ENCODE measurements at regions of chr19 and their contacts with region 1.

Region 1: GRCh38 chr19:46076951-46077816 is 36.4 kb upstream of the IGFL4 start:
- DNase-seq: peak; percentile 89
- H3K4me3 Mint-ChIP-seq: peak overlapping the region; percentile 69
- H3K27ac Mint-ChIP-seq: no peak overlapping the region
- H3K4me1 Mint-ChIP-seq: peaks cover 41% of the 10 kb centered on the region
- H3K27me3 Mint-ChIP-seq: peaks cover 15% of the 10 kb centered on the region
- CTCF ChIP-seq: peak; percentile 98

Region 2: DNA sequence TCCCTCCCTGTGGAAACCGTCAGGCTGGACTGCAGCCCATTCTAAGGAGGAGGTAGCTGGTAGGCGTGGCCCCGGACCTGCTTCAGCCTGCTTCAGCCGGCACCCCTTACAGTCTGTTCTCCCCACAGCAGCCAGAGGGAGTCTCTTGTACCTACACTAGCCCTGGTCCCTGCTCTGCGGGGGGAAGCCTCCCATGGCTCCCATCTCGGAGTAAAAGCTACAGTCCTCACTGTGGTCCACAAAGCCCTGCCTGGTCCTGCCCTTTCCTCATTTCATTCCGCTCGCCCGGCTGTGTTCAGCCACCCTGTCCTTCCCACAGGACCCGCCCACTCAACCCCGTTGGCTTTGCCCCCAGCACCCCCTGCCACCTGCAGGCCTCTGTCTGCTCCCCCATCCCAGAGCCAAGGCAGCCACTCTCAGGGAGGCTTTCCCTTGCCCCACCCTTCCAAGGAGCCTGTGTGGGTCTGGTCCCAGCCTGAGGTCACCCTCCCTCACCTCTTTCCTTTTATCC is 55.6 kb before region 1 on chr19:
- CTCF ChIA-PET with region 1: interaction called, 216 read pairs
- POLR2A ChIA-PET with region 1: interaction called, 4 read pairs
- intact Hi-C with region 1: no loop called
- DNase-seq: peak; percentile 74
- H3K4me3 Mint-ChIP-seq: no peak overlapping the region
- H3K27ac Mint-ChIP-seq: no peak overlapping the region
- H3K4me1 Mint-ChIP-seq: peaks cover 16% of the 10 kb centered on the region
- H3K27me3 Mint-ChIP-seq: no peaks in the 10 kb centered on the region
- CTCF ChIP-seq: no peak

Region 3: GRCh38 chr19:46040952-46041500 is 36.2 kb before region 1 on chr19 and contains the start of gene IGFL4:
- CTCF ChIA-PET with region 1: interaction called, 23 read pairs
- POLR2A ChIA-PET with region 1: interaction called, 3 read pairs
- intact Hi-C with region 1: no loop called
- DNase-seq: peak; percentile 51
- H3K4me3 Mint-ChIP-seq: no peak within 1 kb of the TSS
- H3K27ac Mint-ChIP-seq: no peak within 1 kb of the TSS
- H3K4me1 Mint-ChIP-seq: peaks cover 12% of the 10 kb centered on the region
- H3K27me3 Mint-ChIP-seq: peaks cover 46% of the 10 kb centered on the region
- CTCF ChIP-seq: no peak
- total RNA-seq, gene IGFL4: 0.54 TPM in 1 of 2 replicates, not detected in the other

Region 4: DNA sequence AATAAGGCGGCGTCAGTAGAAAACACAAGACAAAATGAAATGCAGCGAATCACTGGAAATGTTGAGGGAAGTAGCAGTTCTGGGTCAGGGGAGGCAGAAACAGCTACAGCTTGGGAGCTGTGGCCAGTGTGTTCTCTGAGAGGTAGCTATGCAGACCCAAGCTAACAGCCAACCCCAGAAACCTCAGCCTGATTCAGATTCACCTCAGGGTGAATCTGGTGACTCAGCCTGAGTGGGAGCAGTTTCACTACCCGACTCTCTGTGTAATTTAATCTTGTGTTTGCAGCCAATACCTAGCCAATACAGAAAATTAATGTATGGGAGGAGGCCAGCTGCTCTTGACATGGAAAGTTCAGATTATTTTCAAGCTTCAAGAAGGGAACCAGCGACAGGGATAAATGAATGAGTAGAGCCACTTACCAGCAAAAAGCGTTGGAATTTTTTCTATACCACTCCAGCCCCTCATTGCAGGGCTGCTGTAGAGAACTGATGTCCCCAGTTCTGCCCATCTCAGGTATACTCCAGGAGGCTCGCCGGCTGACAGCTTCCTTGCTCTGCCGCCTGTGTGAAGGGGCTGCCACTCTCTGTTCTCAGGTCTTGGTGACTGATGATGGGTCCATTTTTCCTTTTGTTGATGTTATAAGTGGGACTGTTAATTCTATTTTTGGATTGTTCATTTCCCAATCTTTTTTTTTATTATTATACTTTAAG is 38.4 kb after region 1 on chr19:
- CTCF ChIA-PET with region 1: interaction called, 10 read pairs
- POLR2A ChIA-PET with region 1: interaction called, 8 read pairs
- intact Hi-C with region 1: no loop called
- DNase-seq: peak; percentile 94
- H3K4me3 Mint-ChIP-seq: peak overlapping the region; percentile 19
- H3K27ac Mint-ChIP-seq: peak overlapping the region; percentile 82
- H3K4me1 Mint-ChIP-seq: peaks cover 22% of the 10 kb centered on the region
- H3K27me3 Mint-ChIP-seq: no peaks in the 10 kb centered on the region
- CTCF ChIP-seq: no peak

Region 5: GRCh38 chr19:46186101-46187100 is 109.2 kb after region 1 on chr19:
- CTCF ChIA-PET with region 1: interaction called, 75 read pairs
- POLR2A ChIA-PET with region 1: interaction called, 28 read pairs
- intact Hi-C with region 1: loop called (anchors 1 kb)
- DNase-seq: no peak
- H3K4me3 Mint-ChIP-seq: no peak overlapping the region
- H3K27ac Mint-ChIP-seq: peak overlapping the region; percentile 83
- H3K4me1 Mint-ChIP-seq: peaks cover 35% of the 10 kb centered on the region
- H3K27me3 Mint-ChIP-seq: no peaks in the 10 kb centered on the region
- CTCF ChIP-seq: no peak

Region 6: GRCh38 chr19:46206158-46206557 is 129.0 kb after region 1 on chr19:
- CTCF ChIA-PET with region 1: interaction called, 16 read pairs
- POLR2A ChIA-PET with region 1: interaction called, 6 read pairs
- intact Hi-C with region 1: no loop called
- DNase-seq: peak; percentile 96
- H3K4me3 Mint-ChIP-seq: no peak overlapping the region
- H3K27ac Mint-ChIP-seq: peak overlapping the region; percentile 40
- H3K4me1 Mint-ChIP-seq: peaks cover 55% of the 10 kb centered on the region
- H3K27me3 Mint-ChIP-seq: no peaks in the 10 kb centered on the region
- CTCF ChIP-seq: no peak

Region 7: DNA sequence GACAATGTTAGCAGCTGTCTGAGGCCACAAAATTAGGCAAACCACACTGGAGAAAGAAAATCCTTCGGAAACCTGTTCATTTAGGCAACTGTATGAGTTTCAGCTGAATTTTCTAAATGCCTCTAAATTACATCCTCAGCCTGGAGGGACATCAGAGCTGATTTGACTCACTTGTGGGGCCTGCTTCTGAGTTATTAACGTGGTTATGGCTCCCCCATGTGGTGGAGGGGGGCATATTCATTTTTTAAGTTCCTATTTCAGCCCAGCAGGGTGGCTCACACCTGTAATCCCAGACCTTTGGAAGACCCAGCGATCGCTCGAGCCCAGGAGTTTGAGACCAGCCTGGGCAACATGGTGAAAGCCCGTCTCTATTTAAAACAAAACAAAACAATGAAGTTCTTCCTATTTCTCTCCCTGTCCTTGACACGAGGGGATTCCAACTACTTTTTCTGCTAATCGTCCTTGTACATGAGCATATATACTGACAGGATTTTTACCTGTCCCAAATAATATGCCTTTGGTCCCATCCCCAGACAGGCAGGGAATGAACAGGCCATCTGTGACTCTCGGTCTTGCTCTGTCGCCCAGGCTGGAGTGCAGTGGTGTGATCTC is 188.1 kb after region 1 on chr19:
- CTCF ChIA-PET with region 1: interaction called, 265 read pairs
- POLR2A ChIA-PET with region 1: interaction called, 7 read pairs
- intact Hi-C with region 1: loop called (anchors 1 kb)
- DNase-seq: peak; percentile 90
- H3K4me3 Mint-ChIP-seq: no peak overlapping the region
- H3K27ac Mint-ChIP-seq: no peak overlapping the region
- H3K4me1 Mint-ChIP-seq: peaks cover 11% of the 10 kb centered on the region
- H3K27me3 Mint-ChIP-seq: no peaks in the 10 kb centered on the region
- CTCF ChIP-seq: peak; percentile 93

Measured in MCF 10A (cell line).